ENCODE measurements at regions of chr5 and their contacts with region 1.

Region 1: DNA sequence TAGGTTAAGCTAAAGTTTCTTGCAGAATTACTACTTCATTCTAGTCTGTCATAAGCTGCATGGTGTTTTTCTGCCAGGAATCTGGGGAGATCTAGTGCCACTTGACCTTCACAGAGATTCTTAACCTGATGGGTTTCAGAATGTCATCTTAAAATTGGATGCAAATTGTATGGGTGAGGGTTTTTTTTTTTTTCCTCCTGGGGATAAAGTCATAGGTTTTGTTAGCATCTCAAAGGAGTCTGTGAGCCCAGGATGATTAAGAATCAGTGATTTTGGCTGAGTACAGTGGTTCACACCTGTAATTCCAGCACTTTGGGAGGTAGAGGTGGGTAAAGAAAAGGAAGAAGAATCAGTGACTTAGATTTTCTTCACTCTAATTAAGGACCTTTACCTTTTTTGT is 51.2 kb downstream of the NIM1K start:
- DNase-seq: no peak
- ATAC-seq: no peak
- H3K4me3 ChIP-seq: no peak overlapping the region
- H3K27ac ChIP-seq: no peak overlapping the region
- H3K4me1 ChIP-seq: no peaks in the 10 kb centered on the region
- H3K27me3 ChIP-seq: peaks cover 2% of the 10 kb centered on the region; the same call in 1 of the 2 replicates
- CTCF ChIP-seq: no peak

Region 2: DNA sequence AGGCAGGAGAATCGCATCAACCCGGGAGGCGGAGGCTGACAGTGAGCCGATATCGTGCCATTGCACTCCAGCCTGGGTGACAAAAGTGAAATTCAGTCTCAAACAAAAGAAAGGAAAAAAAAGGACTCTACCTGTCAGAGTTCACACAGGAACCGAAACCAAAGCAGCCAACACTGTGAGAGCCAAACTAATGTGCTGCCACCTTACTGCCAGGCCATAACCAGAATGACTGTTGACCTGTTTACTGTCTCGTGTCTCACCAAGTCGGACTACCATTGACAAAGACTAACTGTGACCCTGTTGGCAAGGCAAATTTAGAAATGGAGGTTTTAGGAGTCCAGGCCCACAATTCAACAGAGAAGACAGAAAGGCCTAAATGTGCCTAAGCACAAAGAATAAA is 315.5 kb before region 1 on chr5:
- CTCF ChIA-PET with region 1: no interaction called
- POLR2A ChIA-PET with region 1: no interaction called
- in situ Hi-C with region 1: no loop called
- intact Hi-C with region 1: no loop called
- DNase-seq: no peak
- ATAC-seq: no peak
- H3K4me3 ChIP-seq: no peak overlapping the region
- H3K27ac ChIP-seq: no peak overlapping the region
- H3K4me1 ChIP-seq: no peaks in the 10 kb centered on the region
- H3K27me3 ChIP-seq: no peaks in the 10 kb centered on the region
- CTCF ChIP-seq: no peak

Region 3: GRCh38 chr5:43148417-43148816 is 94.9 kb before region 1 on chr5:
- CTCF ChIA-PET with region 1: no interaction called
- POLR2A ChIA-PET with region 1: interaction called, 10 read pairs
- in situ Hi-C with region 1: no loop called
- intact Hi-C with region 1: no loop called
- DNase-seq: no peak
- ATAC-seq: no peak
- H3K4me3 ChIP-seq: no peak overlapping the region
- H3K27ac ChIP-seq: no peak overlapping the region
- H3K4me1 ChIP-seq: no peaks in the 10 kb centered on the region
- H3K27me3 ChIP-seq: no peaks in the 10 kb centered on the region
- CTCF ChIP-seq: no peak

Region 4: GRCh38 chr5:43281840-43282658 is 38.8 kb after region 1 on chr5:
- CTCF ChIA-PET with region 1: no interaction called
- POLR2A ChIA-PET with region 1: no interaction called
- in situ Hi-C with region 1: no loop called
- intact Hi-C with region 1: no loop called
- DNase-seq: no peak
- ATAC-seq: no peak
- H3K4me3 ChIP-seq: no peak overlapping the region
- H3K27ac ChIP-seq: no peak overlapping the region
- H3K4me1 ChIP-seq: no peaks in the 10 kb centered on the region
- H3K27me3 ChIP-seq: peaks cover 2% of the 10 kb centered on the region
- CTCF ChIP-seq: no peak

Measured in Panc1 (cell line).